Right ventricle myocardium superior (tissue), 1 donor: ENCODE measurements at regions of chr7 and their contacts with region 1.

Region 1: DNA sequence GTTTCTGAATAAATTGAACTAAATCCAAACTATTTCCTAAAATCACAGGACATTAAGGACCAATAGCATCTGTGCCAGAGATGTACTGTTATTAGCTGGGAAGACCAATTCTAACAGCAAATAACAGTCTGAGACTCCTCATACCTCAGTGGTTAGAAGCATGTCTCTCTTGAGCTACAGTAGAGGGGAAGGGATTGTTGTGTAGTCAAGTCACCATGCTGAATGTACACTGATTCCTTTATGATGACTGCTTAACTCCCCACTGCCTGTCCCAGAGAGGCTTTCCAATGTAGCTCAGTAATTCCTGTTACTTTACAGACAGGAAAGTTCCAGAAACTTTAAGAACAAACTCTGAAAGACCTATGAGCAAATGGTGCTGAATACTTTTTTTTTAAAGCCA is 13.9 kb downstream of the MEST start:
- DNase-seq: no peak
- ATAC-seq: no peak

Region 2: GRCh38 chr7:130476297-130477150 is 29.2 kb before region 1 on chr7:
- intact Hi-C with region 1: no loop called
- DNase-seq: no peak
- ATAC-seq: no peak

Region 3: GRCh38 chr7:130695840-130696239 is 190.1 kb after region 1 on chr7:
- intact Hi-C with region 1: loop called (anchors 10 kb)
- DNase-seq: no peak
- ATAC-seq: no peak